Naive thymus-derived CD8-positive, alpha-beta T cell (primary cell): ENCODE measurements at regions of chr5 and their contacts with region 1.

Region 1: GRCh38 chr5:137695651-137696428 is 40.0 kb downstream of the KLHL3 start:
- DNase-seq: peak in 8 of 10 donors; percentile 11 to 73 (median 38)
- ATAC-seq: peak; percentile 79 to 93
- H3K4me3 Mint-ChIP-seq: peak overlapping the region; percentile 64 to 89 (median 84)
- H3K27ac Mint-ChIP-seq: peak overlapping the region; percentile 90 to 100 (median 97)
- H3K4me1 Mint-ChIP-seq: peaks cover 43 to 74% (median 56%) of the 10 kb centered on the region in 4 donors
- H3K27me3 Mint-ChIP-seq: no peaks in the 10 kb centered on the region

Region 2: GRCh38 chr5:137660349-137660817 is 35.5 kb before region 1 on chr5:
- POLR2A ChIA-PET with region 1: interaction called, 11 read pairs
- DNase-seq: peak; percentile 38 to 86 (median 66)
- ATAC-seq: peak; percentile 88 to 97
- H3K4me3 Mint-ChIP-seq: no peak overlapping the region
- H3K27ac Mint-ChIP-seq: peak overlapping the region in 2 of 10 donors; percentile 25 to 57
- H3K4me1 Mint-ChIP-seq: peaks cover 7 to 12% (median 11%) of the 10 kb centered on the region in 4 donors
- H3K27me3 Mint-ChIP-seq: no peaks in the 10 kb centered on the region

Region 3: DNA sequence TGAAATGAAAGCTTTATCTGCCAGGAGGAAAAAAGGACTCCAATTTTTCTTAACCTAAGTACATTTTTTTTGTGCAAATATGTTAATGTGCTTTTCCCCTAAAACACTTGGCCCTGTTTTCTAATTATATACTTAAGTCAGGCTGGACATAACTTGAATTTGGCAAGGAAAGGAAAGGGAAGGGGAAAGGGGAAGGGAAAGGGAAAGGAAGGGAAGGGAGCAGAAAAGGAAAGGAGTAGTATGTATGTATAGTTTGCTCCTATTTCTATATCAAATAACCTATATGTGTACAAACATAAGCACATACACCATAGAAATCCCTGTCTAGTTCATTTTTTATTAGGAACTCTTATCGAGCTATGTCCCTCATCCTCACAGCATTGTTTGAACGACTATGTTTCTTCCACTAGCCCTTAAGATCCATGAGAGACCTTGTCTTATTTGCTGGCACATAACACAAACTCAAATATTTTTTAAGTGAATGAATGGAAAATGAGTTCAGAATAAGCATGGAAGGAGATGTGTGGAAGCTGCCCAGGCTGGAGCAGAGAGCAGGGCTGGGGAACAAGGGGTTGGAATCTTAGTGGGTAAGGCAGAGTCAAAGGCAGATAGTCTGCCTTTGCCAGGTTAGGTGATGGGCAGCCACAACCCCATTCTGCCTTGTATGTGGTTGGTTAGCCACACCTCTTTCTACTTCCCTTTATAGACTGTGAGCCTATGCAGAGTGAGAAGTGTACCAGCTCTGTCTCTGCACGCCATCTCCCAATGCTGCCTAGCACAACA is 30.0 kb before region 1 on chr5:
- POLR2A ChIA-PET with region 1: interaction called, 11 read pairs
- DNase-seq: peak; percentile 18 to 71 (median 37)
- ATAC-seq: peak; percentile 100
- H3K4me3 Mint-ChIP-seq: peak overlapping the region in 5 of 10 donors; percentile 14 to 61 (median 21)
- H3K27ac Mint-ChIP-seq: peak overlapping the region; percentile 12 to 89 (median 68)
- H3K4me1 Mint-ChIP-seq: peaks cover 12 to 19% (median 18%) of the 10 kb centered on the region in 4 donors
- H3K27me3 Mint-ChIP-seq: no peaks in the 10 kb centered on the region

Region 4: GRCh38 chr5:137684761-137685160 is 11.1 kb before region 1 on chr5:
- POLR2A ChIA-PET with region 1: interaction called, 10 read pairs
- DNase-seq: no peak
- ATAC-seq: no peak
- H3K4me3 Mint-ChIP-seq: no peak overlapping the region
- H3K27ac Mint-ChIP-seq: peak overlapping the region in 1 of 10 donors; percentile 7
- H3K4me1 Mint-ChIP-seq: peaks cover 0 to 3% (median 0%) of the 10 kb centered on the region in 4 donors
- H3K27me3 Mint-ChIP-seq: no peaks in the 10 kb centered on the region

Region 5: DNA sequence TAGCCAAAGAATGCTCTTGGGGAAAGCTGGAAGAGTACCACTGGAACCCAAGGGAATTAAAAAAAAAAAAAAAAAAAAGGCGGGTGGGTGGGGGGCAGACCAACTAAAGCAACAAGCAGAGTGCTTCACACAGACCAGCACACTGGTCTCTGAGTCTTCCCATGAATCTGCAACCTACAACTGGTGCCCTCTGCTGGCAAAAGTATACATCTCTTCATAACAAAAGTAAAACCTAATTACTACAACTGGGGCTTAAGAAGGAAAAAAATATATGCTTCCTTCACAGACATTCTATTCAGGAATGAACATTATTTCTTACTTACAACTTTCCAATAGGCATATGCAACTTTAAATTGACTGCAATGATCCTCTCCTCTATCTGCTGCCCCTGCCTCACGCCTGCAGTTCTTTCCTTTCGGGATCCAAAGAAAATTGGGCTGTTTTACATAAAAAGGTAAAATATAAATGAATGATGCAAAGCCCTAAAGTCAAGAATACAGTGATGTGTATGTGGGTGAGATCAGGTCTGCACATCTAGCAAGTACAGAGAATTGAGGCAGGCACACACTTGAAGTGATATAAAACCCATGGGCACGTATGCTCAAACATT is 47.3 kb after region 1 on chr5:
- POLR2A ChIA-PET with region 1: interaction called, 112 read pairs
- DNase-seq: peak; percentile 20 to 82 (median 58)
- ATAC-seq: peak; percentile 92 to 94
- H3K4me3 Mint-ChIP-seq: no peak overlapping the region
- H3K27ac Mint-ChIP-seq: peak overlapping the region in 2 of 10 donors; percentile 21 to 44
- H3K4me1 Mint-ChIP-seq: peaks cover 0 to 30% (median 13%) of the 10 kb centered on the region in 4 donors
- H3K27me3 Mint-ChIP-seq: no peaks in the 10 kb centered on the region

Region 6: DNA sequence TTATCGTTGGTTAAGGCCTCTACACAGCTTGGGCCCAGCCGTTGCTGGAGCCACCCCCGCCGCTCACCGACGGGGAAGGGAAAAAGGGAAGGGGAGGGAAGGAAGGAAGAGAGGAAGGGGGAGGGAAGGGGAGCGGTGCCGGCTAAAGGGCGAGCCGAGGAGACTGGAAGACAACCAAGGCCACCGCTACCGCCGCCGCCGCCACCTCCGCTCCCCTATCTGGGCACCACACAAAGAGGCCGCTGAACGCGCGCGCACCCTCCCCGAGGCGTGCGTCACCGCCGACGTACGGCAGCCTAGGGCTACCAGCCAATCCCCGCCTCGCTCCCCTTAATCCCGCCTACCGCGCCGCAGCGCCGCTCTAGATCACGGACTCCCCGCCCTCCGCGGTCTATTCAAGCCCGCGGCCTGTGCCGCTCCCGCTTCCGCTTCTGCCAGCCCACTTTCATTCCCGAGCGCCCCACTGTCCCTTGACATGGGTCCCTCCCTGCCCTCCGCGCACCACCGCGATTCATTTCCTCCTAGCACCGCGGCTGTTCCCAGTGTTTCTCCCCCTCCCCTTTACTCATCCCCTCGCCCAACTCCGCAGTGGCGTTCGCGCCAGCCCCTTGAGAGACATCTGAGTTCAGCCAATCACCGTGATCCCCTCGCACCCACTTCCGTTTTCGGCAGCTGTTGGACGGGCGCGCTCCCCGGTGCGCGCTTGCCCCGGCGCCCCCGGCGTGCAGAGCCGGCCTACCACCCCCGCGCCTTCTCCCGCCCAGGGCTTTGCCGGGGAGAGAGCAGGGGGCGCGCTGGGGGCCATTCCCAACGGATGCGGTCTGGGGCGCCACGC is 58.5 kb after region 1 on chr5 and contains the start of gene HNRNPA0:
- POLR2A ChIA-PET with region 1: interaction called, 49 read pairs
- DNase-seq: peak; percentile 93 to 100 (median 97)
- ATAC-seq: peak; percentile 83
- H3K4me3 Mint-ChIP-seq: peak within 1 kb of the TSS; percentile 96 to 100 (median 99)
- H3K27ac Mint-ChIP-seq: peak within 1 kb of the TSS; percentile 100
- H3K4me1 Mint-ChIP-seq: peaks cover 16 to 39% (median 27%) of the 10 kb centered on the region in 4 donors
- H3K27me3 Mint-ChIP-seq: no peaks in the 10 kb centered on the region
- polyA plus RNA-seq, gene HNRNPA0: 16.1 to 17.9 (median 16.5) TPM

Region 7: GRCh38 chr5:137914758-137915157 is 218.9 kb after region 1 on chr5:
- POLR2A ChIA-PET with region 1: no interaction called
- DNase-seq: no peak
- ATAC-seq: no peak
- H3K4me3 Mint-ChIP-seq: no peak overlapping the region
- H3K27ac Mint-ChIP-seq: no peak overlapping the region
- H3K4me1 Mint-ChIP-seq: peaks cover 0 to 3% (median under 1%) of the 10 kb centered on the region in 4 donors
- H3K27me3 Mint-ChIP-seq: peaks cover 0 to 4% (median 0%) of the 10 kb centered on the region in 5 donors